ENCODE measurements at regions of chr11 and their contacts with region 1.

Region 1: GRCh38 chr11:130002846-130003716 is 446 bp upstream of the PRDM10 start:
- DNase-seq: peak; percentile 91
- H3K4me3 Mint-ChIP-seq: peak overlapping the region; percentile 94
- H3K27ac Mint-ChIP-seq: peak overlapping the region; percentile 100
- H3K4me1 Mint-ChIP-seq: peaks cover 32% of the 10 kb centered on the region
- H3K27me3 Mint-ChIP-seq: no peaks in the 10 kb centered on the region

Region 2: GRCh38 chr11:129815596-129816461 is 187.3 kb before region 1 on chr11 and contains the start of gene TMEM45B:
- CTCF ChIA-PET with region 1: no interaction called
- POLR2A ChIA-PET with region 1: interaction called, 7 read pairs
- intact Hi-C with region 1: loop called (anchors 2 kb)
- DNase-seq: peak; percentile 62
- H3K4me3 Mint-ChIP-seq: peak within 1 kb of the TSS; percentile 87
- H3K27ac Mint-ChIP-seq: peak within 1 kb of the TSS; percentile 78
- H3K4me1 Mint-ChIP-seq: peaks cover 54% of the 10 kb centered on the region
- H3K27me3 Mint-ChIP-seq: peaks cover 2% of the 10 kb centered on the region
- total RNA-seq, gene TMEM45B: 4.9 to 5.8 TPM

Region 3: GRCh38 chr11:129960216-129961214 is 42.6 kb before region 1 on chr11:
- CTCF ChIA-PET with region 1: no interaction called
- POLR2A ChIA-PET with region 1: interaction called, 3 read pairs
- intact Hi-C with region 1: loop called (anchors 2 kb)
- DNase-seq: peak; percentile 28
- H3K4me3 Mint-ChIP-seq: no peak overlapping the region
- H3K27ac Mint-ChIP-seq: no peak overlapping the region
- H3K4me1 Mint-ChIP-seq: peaks cover 8% of the 10 kb centered on the region
- H3K27me3 Mint-ChIP-seq: no peaks in the 10 kb centered on the region

Region 4: DNA sequence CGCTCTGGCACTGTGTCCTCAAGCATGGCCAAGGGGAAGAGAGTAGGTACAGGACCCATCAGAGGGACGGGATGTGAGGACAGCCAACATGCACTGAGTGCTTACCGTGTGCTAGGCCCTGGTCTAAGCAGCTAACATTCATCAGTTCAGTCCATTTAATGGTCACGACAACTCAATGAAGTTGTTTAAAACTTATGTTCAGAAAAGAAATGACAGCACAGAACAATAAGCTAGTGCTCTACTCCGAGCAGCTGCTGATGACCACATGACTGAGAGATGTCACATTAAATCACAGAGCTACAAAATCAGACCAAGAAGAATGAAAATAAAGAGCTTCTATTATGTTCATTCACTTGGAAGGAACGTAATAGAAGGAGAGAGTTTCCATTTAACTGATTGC is 26.8 kb before region 1 on chr11:
- CTCF ChIA-PET with region 1: no interaction called
- POLR2A ChIA-PET with region 1: no interaction called
- intact Hi-C with region 1: no loop called
- DNase-seq: no peak
- H3K4me3 Mint-ChIP-seq: no peak overlapping the region
- H3K27ac Mint-ChIP-seq: no peak overlapping the region
- H3K4me1 Mint-ChIP-seq: no peaks in the 10 kb centered on the region
- H3K27me3 Mint-ChIP-seq: no peaks in the 10 kb centered on the region

Region 5: GRCh38 chr11:130069684-130070108 is 66.6 kb after region 1 on chr11 and contains the start of gene APLP2:
- CTCF ChIA-PET with region 1: interaction called, 13 read pairs
- POLR2A ChIA-PET with region 1: interaction called, 10 read pairs
- intact Hi-C with region 1: loop called (anchors 1 kb)
- DNase-seq: peak; percentile 98
- H3K4me3 Mint-ChIP-seq: peak within 1 kb of the TSS; percentile 93
- H3K27ac Mint-ChIP-seq: peak within 1 kb of the TSS; percentile 87
- H3K4me1 Mint-ChIP-seq: peaks cover 16% of the 10 kb centered on the region
- H3K27me3 Mint-ChIP-seq: peaks cover 3% of the 10 kb centered on the region
- total RNA-seq, gene APLP2: 49.2 to 53.4 TPM

Region 6: GRCh38 chr11:130131961-130132850 is 129.1 kb after region 1 on chr11:
- CTCF ChIA-PET with region 1: interaction called, 13 read pairs
- POLR2A ChIA-PET with region 1: interaction called, 3 read pairs
- intact Hi-C with region 1: no loop called
- DNase-seq: peak; percentile 55
- H3K4me3 Mint-ChIP-seq: no peak overlapping the region
- H3K27ac Mint-ChIP-seq: no peak overlapping the region
- H3K4me1 Mint-ChIP-seq: no peaks in the 10 kb centered on the region
- H3K27me3 Mint-ChIP-seq: no peaks in the 10 kb centered on the region

Measured in activated CD4-positive, alpha-beta memory T cell treated with anti-CD3 and anti-CD28 coated beads for 36 hours (primary cell).